ENCODE measurements at regions of chr3 and their contacts with region 1.

Region 1: GRCh38 chr3:150763122-150763841 is at the start of gene SIAH2:
- DNase-seq: peak; percentile 90
- H3K4me3 Mint-ChIP-seq: peak within 1 kb of the TSS; percentile 99
- H3K27ac Mint-ChIP-seq: peak within 1 kb of the TSS; percentile 100
- H3K4me1 Mint-ChIP-seq: peaks cover 64% of the 10 kb centered on the region
- H3K27me3 Mint-ChIP-seq: no peaks in the 10 kb centered on the region
- total RNA-seq, gene SIAH2: 175 and 177 TPM in 2 replicates

Region 2: GRCh38 chr3:150603153-150603979 is 159.9 kb before region 1 on chr3 and contains the start of gene SELENOT:
- intact Hi-C with region 1: loop called (anchors 1 kb)
- DNase-seq: peak; percentile 96
- H3K4me3 Mint-ChIP-seq: peak within 1 kb of the TSS; percentile 99
- H3K27ac Mint-ChIP-seq: peak within 1 kb of the TSS; percentile 99
- H3K4me1 Mint-ChIP-seq: peaks cover 80% of the 10 kb centered on the region
- H3K27me3 Mint-ChIP-seq: peaks cover 2% of the 10 kb centered on the region
- total RNA-seq, gene SELENOT: 139 and 140 TPM in 2 replicates

Region 3: DNA sequence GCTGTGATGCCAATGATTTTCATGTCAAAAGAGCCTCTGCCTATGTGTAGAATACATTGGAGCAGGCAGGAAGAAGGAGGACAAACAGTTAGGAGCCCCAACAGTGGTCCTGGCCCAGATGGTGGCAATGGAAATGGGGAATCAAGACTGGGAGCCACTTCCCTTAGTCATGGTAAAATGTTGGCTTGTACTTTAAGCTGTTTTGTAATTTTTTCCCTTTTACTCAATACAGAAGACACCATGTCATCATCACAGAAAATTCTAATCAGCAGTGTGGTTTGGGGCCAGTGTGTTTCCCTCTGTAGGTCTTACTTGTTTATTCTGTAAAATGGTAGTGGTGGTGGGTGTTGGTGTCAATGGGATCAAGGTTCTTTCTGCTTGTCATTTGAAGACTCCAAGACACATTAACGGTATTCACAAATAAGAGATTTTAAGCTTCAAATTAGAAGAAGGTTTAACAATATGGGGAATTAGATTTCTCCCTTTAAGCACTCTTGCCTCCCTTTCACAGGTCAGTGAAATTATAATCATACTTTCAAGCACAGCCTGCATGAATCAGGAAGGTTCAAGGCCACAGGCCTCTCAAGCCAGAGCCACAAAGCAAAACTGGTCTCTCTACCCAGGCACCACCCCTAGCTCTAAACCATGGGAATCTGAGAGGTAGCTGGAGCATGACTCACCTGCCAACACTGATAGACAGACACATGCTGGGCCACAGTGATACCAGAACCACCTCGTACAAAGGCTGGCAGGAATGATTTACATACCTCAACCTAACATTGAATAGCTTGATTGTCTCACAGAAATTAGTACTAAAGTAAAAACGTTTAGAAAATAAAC is 25.2 kb before region 1 on chr3:
- intact Hi-C with region 1: loop called (anchors 1 kb)
- DNase-seq: no peak
- H3K4me3 Mint-ChIP-seq: peak overlapping the region; percentile 42
- H3K27ac Mint-ChIP-seq: peak overlapping the region; percentile 92
- H3K4me1 Mint-ChIP-seq: peaks cover 93% of the 10 kb centered on the region
- H3K27me3 Mint-ChIP-seq: no peaks in the 10 kb centered on the region

Region 4: DNA sequence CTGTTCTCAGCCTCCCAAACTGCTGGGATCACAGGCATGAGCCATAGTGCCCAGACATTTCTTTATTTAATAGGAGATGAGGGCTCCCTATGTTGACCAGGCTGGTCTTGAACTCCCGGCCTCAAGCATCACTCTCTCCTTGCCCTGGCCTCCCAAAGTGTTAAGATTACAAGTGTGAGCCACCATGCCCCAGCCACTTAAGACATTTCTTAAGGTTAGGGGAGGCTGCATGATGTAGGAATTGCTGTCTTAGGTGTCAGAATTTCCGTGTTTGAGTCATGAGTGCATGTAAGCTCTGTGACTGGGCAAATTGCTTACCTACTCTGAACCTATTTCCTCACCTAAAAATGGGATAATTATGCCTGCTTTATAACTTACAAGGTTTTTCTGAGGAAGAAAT is 33.8 kb after region 1 on chr3:
- intact Hi-C with region 1: loop called (anchors 1 kb)
- DNase-seq: no peak
- H3K4me3 Mint-ChIP-seq: no peak overlapping the region
- H3K27ac Mint-ChIP-seq: peak overlapping the region; percentile 1
- H3K4me1 Mint-ChIP-seq: peaks cover 23% of the 10 kb centered on the region
- H3K27me3 Mint-ChIP-seq: peaks cover 2% of the 10 kb centered on the region

Region 5: DNA sequence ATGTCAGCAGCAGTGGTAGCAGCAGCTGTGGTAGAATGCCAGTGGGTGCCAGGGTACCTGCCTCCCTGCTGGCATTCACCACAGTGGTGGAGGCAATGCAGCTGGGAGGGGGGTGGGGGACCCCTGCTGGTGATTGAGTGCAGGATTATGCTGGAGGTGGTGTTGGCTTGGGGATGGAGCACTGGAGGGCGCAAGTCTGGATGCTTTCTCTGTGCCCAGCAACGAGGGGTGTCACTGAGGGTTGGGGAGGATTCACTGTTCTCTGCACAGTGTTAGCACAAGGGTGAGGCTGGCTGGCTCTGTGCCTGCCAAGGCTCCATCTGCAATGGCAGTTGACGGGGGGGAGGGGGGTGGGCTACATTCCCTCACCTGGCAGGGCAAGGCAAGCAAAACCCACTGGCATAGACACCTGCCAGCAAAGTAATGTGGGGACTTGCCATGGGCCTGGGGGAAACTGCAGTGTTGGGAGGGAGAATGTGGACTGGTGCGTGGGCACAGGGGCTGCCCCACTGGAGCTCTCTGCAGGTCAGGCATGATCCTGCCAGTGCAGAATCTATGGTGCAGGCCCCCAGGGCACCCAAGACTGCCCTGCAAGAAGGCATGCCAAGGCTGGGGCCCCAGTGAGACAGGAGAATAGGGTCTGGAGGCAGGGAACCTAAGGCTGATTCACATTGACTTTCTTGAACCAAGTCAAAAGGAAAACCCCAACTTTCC is 77.7 kb after region 1 on chr3:
- intact Hi-C with region 1: no loop called
- DNase-seq: no peak
- H3K4me3 Mint-ChIP-seq: no peak overlapping the region
- H3K27ac Mint-ChIP-seq: no peak overlapping the region
- H3K4me1 Mint-ChIP-seq: no peaks in the 10 kb centered on the region
- H3K27me3 Mint-ChIP-seq: peaks cover 29% of the 10 kb centered on the region

Region 6: GRCh38 chr3:151305101-151305750 is 541.9 kb after region 1 on chr3:
- intact Hi-C with region 1: loop called (anchors 5 kb)
- DNase-seq: no peak
- H3K4me3 Mint-ChIP-seq: peak overlapping the region; percentile 5
- H3K27ac Mint-ChIP-seq: peak overlapping the region; percentile 70
- H3K4me1 Mint-ChIP-seq: peaks cover 63% of the 10 kb centered on the region
- H3K27me3 Mint-ChIP-seq: peaks cover 3% of the 10 kb centered on the region

Region 7: GRCh38 chr3:152268555-152269425 is 1505.5 kb after region 1 on chr3 and contains the start of gene MBNL1:
- intact Hi-C with region 1: loop called (anchors 5 kb)
- DNase-seq: peak; percentile 81
- H3K4me3 Mint-ChIP-seq: peak within 1 kb of the TSS; percentile 90
- H3K27ac Mint-ChIP-seq: peak within 1 kb of the TSS; percentile 94
- H3K4me1 Mint-ChIP-seq: peaks cover 74% of the 10 kb centered on the region
- H3K27me3 Mint-ChIP-seq: no peaks in the 10 kb centered on the region
- total RNA-seq, gene MBNL1: 295 and 308 TPM in 2 replicates